MCF 10A (cell line): ENCODE measurements at regions of chr16 and their contacts with region 1.

Region 1: DNA sequence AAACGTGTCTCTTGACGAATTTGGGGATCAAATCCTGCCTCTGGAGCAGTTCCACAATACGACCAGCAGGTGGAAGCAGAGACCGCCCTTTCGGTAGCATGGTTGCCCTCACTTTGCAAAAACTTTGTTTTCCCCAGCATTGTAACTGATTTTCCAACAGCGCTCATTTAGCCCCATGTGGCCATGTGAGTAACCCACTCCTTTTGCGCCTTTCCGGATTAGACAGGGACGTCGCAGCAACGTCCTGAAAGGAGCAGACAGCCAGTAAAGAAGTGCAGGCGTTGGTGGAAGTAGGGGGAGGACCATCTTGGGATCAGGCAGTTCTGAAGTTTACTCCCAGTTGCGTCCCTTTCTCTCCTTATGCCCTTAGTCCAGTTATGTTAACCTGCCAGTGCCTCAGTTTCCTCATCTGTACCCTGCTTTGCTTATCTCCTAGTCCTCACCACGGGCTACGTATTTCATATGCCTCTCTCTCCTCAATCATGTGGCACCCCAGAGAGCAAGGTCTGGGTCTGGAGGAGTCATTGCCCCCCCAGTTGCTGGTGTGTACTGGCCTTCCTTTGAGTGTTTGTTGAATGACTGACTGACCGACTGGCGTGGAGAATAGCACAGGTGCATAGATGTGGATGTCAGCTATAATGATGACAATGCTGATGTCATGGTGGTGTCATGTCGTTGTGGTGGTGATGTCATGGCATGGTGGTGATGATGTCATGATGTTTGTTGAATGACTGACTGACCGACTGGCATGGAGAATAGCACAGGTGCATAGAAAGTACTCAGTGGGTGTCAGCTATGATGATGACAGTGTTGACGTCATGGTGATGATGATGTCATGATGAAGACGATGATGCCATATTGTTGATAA is 22.3 kb downstream of the TMEM114 start:
- DNase-seq: peak; percentile 93
- H3K4me3 Mint-ChIP-seq: no peak overlapping the region
- H3K27ac Mint-ChIP-seq: no peak overlapping the region
- H3K4me1 Mint-ChIP-seq: peaks cover 3% of the 10 kb centered on the region
- H3K27me3 Mint-ChIP-seq: no peaks in the 10 kb centered on the region
- CTCF ChIP-seq: peak; percentile 97

Region 2: DNA sequence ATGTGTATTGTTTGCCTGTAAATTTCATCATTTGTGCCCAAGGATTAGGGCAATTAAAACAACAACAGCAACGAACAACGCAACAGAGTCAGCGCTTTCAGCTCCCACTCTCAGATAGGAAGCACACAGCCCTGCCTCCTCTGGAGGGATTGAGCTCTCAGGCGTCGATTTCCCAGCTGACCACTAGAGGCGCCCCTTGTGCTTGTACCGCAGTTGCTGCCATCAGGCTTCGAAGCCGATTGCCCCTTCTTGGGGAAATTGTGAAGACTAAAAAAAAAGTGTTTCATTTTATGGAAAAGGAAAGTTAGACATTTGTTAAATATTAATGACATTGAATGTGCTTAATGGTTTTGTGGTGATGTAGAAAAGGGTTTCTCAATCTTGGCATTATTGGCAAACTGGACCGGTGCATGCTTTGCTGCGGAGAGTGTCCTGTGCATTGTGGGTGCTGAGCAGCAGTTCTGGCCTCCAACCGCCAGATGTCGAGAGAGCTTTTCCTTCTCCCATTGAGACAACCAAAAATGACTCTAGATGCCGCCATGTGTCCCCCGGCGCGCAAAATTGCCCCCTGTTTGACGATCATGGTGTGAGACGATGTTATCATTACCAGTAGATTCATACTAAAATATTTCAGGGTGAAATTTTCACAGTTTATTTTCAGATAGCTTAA is 1885.7 kb before region 1 on chr16:
- CTCF ChIA-PET with region 1: interaction called, 5 read pairs
- POLR2A ChIA-PET with region 1: no interaction called
- intact Hi-C with region 1: loop called (anchors 5 kb)
- DNase-seq: no peak
- H3K4me3 Mint-ChIP-seq: no peak overlapping the region
- H3K27ac Mint-ChIP-seq: no peak overlapping the region
- H3K4me1 Mint-ChIP-seq: no peaks in the 10 kb centered on the region
- H3K27me3 Mint-ChIP-seq: no peaks in the 10 kb centered on the region
- CTCF ChIP-seq: peak; percentile 31

Region 3: DNA sequence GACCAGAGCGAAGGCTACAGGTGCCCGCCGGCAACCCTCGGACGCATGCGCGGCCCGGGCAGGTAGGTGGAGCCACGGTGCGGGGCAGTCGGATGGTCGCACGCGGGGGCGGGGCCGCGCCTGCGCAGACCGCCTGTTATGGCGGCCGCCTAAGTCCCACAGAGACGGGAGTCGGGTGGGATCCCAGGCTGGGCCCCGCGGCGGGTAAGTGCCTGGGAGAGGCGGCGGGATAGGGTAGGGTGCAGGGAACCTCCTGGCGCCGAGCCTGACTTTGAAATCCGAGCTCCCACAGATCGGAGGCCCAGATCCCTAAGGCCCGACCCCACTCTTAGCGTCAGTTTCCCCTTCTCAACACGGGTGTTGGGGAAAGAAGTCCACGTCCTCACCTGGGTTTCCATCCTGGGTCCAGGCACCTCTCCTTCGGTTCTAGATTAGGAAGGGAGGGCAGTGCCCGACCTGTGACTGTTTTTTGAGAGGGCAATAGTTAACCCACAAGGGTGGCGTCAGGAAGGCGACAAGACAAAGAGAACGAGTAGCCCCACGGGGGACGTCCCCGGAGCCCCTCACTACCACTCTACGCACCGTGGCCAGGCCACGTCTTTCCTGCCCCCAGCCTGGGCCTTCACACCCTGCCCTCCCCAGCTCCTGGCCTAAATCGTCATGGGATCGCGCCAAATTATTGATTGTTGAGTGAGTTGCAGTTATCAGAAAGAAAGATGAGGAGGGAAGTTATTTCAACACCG is 53.8 kb after region 1 on chr16 and contains the start of gene METTL22:
- CTCF ChIA-PET with region 1: interaction called, 19 read pairs
- POLR2A ChIA-PET with region 1: interaction called, 6 read pairs
- intact Hi-C with region 1: loop called (anchors 5 kb)
- DNase-seq: peak; percentile 84
- H3K4me3 Mint-ChIP-seq: peak within 1 kb of the TSS; percentile 84
- H3K27ac Mint-ChIP-seq: peak within 1 kb of the TSS; percentile 92
- H3K4me1 Mint-ChIP-seq: peaks cover 11% of the 10 kb centered on the region
- H3K27me3 Mint-ChIP-seq: no peaks in the 10 kb centered on the region
- CTCF ChIP-seq: no peak
- total RNA-seq, gene METTL22: 36.7 and 47.2 TPM in 2 replicates

Region 4: DNA sequence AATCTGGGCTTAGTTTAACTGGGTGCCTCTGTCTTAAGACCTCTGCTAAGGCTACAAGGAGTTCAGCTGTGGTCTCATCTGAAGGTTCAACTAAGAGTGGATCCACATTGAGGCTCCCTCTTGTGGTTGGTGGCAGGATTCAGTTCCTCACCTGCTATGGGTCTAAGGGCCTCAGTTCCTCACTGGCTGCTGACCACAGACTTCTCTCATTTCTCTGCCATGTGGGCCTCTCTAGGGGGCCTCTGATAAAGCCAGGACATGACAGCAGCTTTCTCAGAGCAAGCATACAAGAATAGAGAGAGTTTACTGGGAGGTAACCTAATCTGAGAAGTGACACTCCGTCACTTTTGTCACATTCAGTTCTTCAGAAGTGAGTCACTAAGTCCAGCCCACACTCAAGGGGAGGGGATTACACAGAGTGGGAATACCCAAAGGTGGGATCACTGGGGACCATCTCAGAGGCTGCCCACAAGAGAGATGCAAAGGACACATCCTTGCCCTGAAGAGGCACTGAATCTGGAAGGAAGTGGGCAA is 87.3 kb after region 1 on chr16:
- CTCF ChIA-PET with region 1: interaction called, 60 read pairs
- POLR2A ChIA-PET with region 1: interaction called, 3 read pairs
- intact Hi-C with region 1: loop called (anchors 1 kb)
- DNase-seq: peak; percentile 66
- H3K4me3 Mint-ChIP-seq: no peak overlapping the region
- H3K27ac Mint-ChIP-seq: no peak overlapping the region
- H3K4me1 Mint-ChIP-seq: no peaks in the 10 kb centered on the region
- H3K27me3 Mint-ChIP-seq: no peaks in the 10 kb centered on the region
- CTCF ChIP-seq: peak; percentile 36

Region 5: GRCh38 chr16:8797364-8798173 is 229.6 kb after region 1 on chr16 and contains the starts of genes PMM2 and TMEM186:
- CTCF ChIA-PET with region 1: interaction called, 17 read pairs
- POLR2A ChIA-PET with region 1: no interaction called
- intact Hi-C with region 1: loop called (anchors 1 kb)
- DNase-seq: peak; percentile 96
- H3K4me3 Mint-ChIP-seq: peak within 1 kb of the TSS; percentile 92
- H3K27ac Mint-ChIP-seq: peak within 1 kb of the TSS; percentile 97
- H3K4me1 Mint-ChIP-seq: peaks cover 9% of the 10 kb centered on the region
- H3K27me3 Mint-ChIP-seq: no peaks in the 10 kb centered on the region
- CTCF ChIP-seq: no peak
- total RNA-seq, gene PMM2: 59.4 and 60.6 TPM in 2 replicates
- total RNA-seq, gene TMEM186: 12.9 and 13.9 TPM in 2 replicates

Region 6: GRCh38 chr16:9033125-9033830 is 465.3 kb after region 1 on chr16:
- CTCF ChIA-PET with region 1: no interaction called
- POLR2A ChIA-PET with region 1: interaction called, 3 read pairs
- intact Hi-C with region 1: loop called (anchors 5 kb)
- DNase-seq: peak; percentile 83
- H3K4me3 Mint-ChIP-seq: no peak overlapping the region
- H3K27ac Mint-ChIP-seq: no peak overlapping the region
- H3K4me1 Mint-ChIP-seq: no peaks in the 10 kb centered on the region
- H3K27me3 Mint-ChIP-seq: no peaks in the 10 kb centered on the region
- CTCF ChIP-seq: peak; percentile 35